ENCODE measurements at regions of chr19 and their contacts with region 1.

Region 1: GRCh38 chr19:12881172-12881808 is at the start of gene DNASE2:
- DNase-seq: peak; percentile 99
- H3K4me3 ChIP-seq: peak within 1 kb of the TSS in 2 of 3 donors; percentile 55 to 72
- H3K27ac ChIP-seq: peak within 1 kb of the TSS; percentile 69 to 86 (median 79)
- H3K4me1 ChIP-seq: peaks cover 14 to 21% of the 10 kb centered on the region in 2 donors
- H3K27me3 ChIP-seq: no peaks in the 10 kb centered on the region
- CTCF ChIP-seq: no peak
- POLR2A ChIP-seq: peak in 1 of 2 donors; percentile 94
- total RNA-seq, gene DNASE2: 35.4 to 67.3 (median 59.1) TPM

Region 2: DNA sequence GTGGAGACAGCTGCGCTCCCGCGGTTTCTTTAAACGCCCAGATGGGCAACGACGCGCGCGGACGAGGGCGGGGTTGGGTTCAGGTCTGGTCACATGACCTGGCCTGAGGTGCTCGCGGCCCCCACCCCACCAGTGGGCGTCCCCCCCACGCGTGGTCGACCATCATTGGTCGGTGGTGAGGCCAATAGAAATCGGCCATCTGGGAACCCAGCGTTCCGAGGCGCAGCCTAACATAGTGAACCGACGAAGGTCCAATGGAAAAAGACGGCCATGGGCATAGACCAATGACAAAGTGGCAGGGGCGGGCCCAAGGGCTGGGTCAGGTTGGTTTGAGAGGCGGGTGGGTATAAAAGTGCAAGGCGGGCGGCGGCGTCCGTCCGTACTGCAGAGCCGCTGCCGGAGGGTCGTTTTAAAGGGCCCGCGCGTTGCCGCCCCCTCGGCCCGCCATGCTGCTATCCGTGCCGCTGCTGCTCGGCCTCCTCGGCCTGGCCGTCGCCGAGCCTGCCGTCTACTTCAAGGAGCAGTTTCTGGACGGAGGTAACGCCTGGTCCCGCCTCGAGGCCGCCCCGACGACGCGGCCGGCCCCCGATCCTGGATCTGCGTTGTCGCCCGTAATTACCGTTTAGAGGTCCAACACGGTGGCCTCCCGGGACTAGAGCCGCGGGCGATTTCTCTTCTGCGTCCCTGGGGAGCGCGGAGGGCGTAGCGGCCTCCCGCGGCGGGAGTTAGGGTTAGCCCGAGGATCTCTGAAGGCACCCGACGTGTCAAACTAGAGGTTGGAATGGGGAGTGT is 57.1 kb after region 1 on chr19 and contains the start of gene CALR:
- intact Hi-C with region 1: loop called (anchors 10 kb)
- DNase-seq: peak; percentile 100
- H3K4me3 ChIP-seq: peak within 1 kb of the TSS; percentile 98 to 100 (median 99)
- H3K27ac ChIP-seq: peak within 1 kb of the TSS; percentile 90 to 98 (median 96)
- H3K4me1 ChIP-seq: peaks cover 36 to 47% of the 10 kb centered on the region in 2 donors
- H3K27me3 ChIP-seq: no peaks in the 10 kb centered on the region
- CTCF ChIP-seq: peak in 1 of 6 experiments; percentile 26
- POLR2A ChIP-seq: peak; percentile 99 to 100
- total RNA-seq, gene CALR: 1,892 to 4,270 (median 2,942) TPM

Region 3: GRCh38 chr19:12965017-12965811 is 83.9 kb after region 1 on chr19:
- intact Hi-C with region 1: loop called (anchors 2 kb)
- DNase-seq: peak; percentile 70 to 78
- H3K4me3 ChIP-seq: peak overlapping the region in 2 of 3 donors; percentile 18 to 36
- H3K27ac ChIP-seq: peak overlapping the region in 2 of 3 donors; percentile 51 to 69
- H3K4me1 ChIP-seq: peaks cover 7 to 8% of the 10 kb centered on the region in 2 donors
- H3K27me3 ChIP-seq: no peaks in the 10 kb centered on the region
- CTCF ChIP-seq: peak; percentile 75 to 96 (median 89)
- POLR2A ChIP-seq: no peak

Region 4: GRCh38 chr19:13033819-13034611 is 152.7 kb after region 1 on chr19:
- intact Hi-C with region 1: no loop called
- DNase-seq: peak; percentile 95 to 97
- H3K4me3 ChIP-seq: no peak overlapping the region
- H3K27ac ChIP-seq: peak overlapping the region; percentile 75 to 93 (median 88)
- H3K4me1 ChIP-seq: peaks cover 91 to 98% of the 10 kb centered on the region in 2 donors
- H3K27me3 ChIP-seq: no peaks in the 10 kb centered on the region
- CTCF ChIP-seq: peak; percentile 58 to 85 (median 78)
- POLR2A ChIP-seq: peak in 1 of 2 donors; percentile 22

Measured in thyroid gland (tissue), 4 donors.